ENCODE measurements at regions of chr15 and their contacts with region 1.

Region 1: DNA sequence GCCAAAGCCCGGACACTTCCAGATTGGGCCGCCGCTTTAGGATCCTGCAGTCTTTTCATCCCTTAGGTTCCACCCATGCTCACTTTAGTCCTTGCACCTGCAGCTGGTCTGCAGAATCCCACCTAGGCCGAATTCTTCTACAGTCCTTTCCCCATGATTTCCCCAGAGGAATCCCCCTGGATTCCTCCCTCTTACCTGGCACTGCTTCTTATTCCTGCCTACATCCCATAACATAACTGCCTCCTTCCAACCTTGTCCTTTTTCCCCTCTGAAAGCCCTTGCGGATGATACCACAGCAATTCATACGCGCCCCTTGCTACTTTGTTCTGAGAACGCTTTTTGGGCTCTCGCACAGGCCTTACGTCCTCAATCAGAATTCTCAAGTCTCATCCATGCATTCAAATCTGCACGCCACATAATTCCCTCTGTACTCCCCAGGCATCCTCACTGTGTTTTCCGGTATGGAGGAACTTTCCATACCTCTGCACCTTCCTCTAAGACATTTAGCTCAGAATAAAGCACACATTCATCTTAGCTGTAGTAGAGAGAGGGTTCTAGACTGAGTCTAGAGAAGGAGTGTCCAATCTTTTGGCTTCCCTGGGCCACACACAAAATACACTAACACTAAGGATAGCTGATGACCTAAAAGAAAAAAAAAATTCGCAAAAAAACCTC is 619 bp downstream of the EIF2AK4 start:
- DNase-seq: peak; percentile 28
- ATAC-seq: peak; percentile 2
- H3K4me3 ChIP-seq: peak overlapping the region; percentile 83
- H3K27ac ChIP-seq: peak overlapping the region; percentile 97
- H3K4me1 ChIP-seq: peaks cover 38% of the 10 kb centered on the region
- H3K27me3 ChIP-seq: no peaks in the 10 kb centered on the region
- CTCF ChIP-seq: no peak

Region 2: GRCh38 chr15:39336926-39337325 is 597.6 kb before region 1 on chr15:
- CTCF ChIA-PET with region 1: no interaction called
- POLR2A ChIA-PET with region 1: no interaction called
- intact Hi-C with region 1: no loop called
- DNase-seq: no peak
- ATAC-seq: no peak
- H3K4me3 ChIP-seq: no peak overlapping the region
- H3K27ac ChIP-seq: no peak overlapping the region
- H3K4me1 ChIP-seq: 0 out of 2 replicates have a peak, but pooled peaks cover 7% of the 10 kb centered on the region
- H3K27me3 ChIP-seq: no peaks in the 10 kb centered on the region
- CTCF ChIP-seq: no peak

Region 3: DNA sequence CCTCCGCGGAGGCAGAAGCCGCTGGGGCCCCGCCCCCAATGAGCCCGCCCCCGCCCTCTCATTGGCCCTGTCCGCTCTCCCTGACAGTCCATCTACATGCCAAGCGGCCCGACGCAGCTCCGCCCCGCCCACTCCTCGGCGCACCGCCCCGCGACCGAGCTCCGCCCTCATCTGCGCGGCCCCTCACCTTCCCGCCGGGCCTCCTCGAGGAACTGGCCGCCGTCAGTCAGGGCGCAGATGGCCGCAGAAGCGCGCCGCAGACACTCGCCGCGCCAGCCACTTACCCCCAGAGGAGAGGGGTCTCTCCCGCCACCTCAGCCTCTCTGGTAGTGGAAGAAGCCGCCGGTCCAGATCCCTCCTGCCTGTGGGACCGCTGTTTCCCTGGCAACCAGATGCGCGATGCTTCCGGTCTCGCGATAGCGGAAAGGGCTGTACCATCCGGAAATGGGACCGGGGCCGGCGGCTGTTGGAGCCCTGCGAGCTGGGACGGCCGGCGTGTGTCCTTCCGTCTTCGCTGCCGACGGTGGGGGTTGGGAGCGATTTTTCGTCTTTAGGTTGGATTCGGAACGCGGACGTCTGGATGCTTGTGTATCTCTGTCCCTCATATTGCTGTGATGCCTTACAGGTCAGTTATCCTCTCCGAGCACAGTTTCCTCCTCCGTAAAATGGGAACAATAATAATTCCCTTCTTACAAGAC is 151.9 kb before region 1 on chr15 and contains the start of gene FSIP1:
- CTCF ChIA-PET with region 1: interaction called, 3 read pairs
- POLR2A ChIA-PET with region 1: interaction called, 5 read pairs
- intact Hi-C with region 1: loop called (anchors 1 kb)
- DNase-seq: peak; percentile 97
- ATAC-seq: peak; percentile 88
- H3K4me3 ChIP-seq: peak within 1 kb of the TSS; percentile 97
- H3K27ac ChIP-seq: peak within 1 kb of the TSS; percentile 73
- H3K4me1 ChIP-seq: peaks cover 49% of the 10 kb centered on the region
- H3K27me3 ChIP-seq: no peaks in the 10 kb centered on the region
- CTCF ChIP-seq: no peak
- total RNA-seq, gene FSIP1: 0.07 and 0.81 TPM in 2 replicates

Region 4: GRCh38 chr15:39887832-39888231 is 46.7 kb before region 1 on chr15:
- CTCF ChIA-PET with region 1: interaction called, 16 read pairs
- POLR2A ChIA-PET with region 1: interaction called, 7 read pairs
- intact Hi-C with region 1: loop called (anchors 1 kb)
- DNase-seq: peak; percentile 76
- ATAC-seq: peak; percentile 91
- H3K4me3 ChIP-seq: no peak overlapping the region
- H3K27ac ChIP-seq: peak overlapping the region; percentile 45
- H3K4me1 ChIP-seq: peaks cover 22% of the 10 kb centered on the region
- H3K27me3 ChIP-seq: no peaks in the 10 kb centered on the region
- CTCF ChIP-seq: peak; percentile 78

Region 5: DNA sequence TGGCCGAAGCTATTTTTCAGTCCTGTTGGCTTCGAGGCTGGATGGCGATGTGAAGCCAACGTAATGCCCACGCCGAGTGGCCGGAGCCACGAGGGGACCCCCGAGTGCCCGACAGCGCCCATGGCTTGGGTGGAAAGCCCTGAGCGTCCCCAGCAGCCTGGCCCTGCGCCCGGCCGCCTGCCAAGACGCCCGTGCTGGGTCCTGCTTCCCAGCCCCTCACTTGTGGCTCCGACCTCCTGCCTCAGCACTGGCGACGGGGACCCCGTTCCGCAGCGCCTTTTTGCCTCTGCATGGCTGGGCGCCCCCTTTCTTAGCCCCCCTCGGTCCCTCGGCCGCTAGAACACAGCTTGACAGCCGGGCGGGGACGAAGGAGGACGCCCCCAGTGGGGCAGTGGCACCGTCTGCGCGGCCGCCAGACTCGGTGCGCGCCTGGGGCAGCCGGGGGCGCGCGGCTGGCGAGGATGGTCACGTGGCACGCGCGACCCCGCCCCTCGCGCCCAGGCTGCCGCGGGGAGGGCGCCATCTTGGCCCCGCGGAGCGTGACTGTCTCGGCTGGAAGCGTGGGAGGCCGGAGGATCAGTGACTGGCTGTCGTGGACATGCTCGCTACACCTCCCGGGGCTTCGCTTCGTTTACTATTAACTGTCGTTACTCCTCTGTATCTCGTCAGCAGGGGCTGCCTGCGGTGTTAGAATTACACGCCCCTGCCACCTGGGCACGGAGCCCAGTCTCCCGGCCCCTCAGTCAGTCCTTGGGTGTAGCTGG is 13.8 kb before region 1 on chr15:
- CTCF ChIA-PET with region 1: no interaction called
- POLR2A ChIA-PET with region 1: no interaction called
- intact Hi-C with region 1: loop called (anchors 1 kb)
- DNase-seq: peak; percentile 80
- ATAC-seq: peak; percentile 58
- H3K4me3 ChIP-seq: peak overlapping the region; percentile 89
- H3K27ac ChIP-seq: peak overlapping the region; percentile 64
- H3K4me1 ChIP-seq: peaks cover 25% of the 10 kb centered on the region
- H3K27me3 ChIP-seq: no peaks in the 10 kb centered on the region
- CTCF ChIP-seq: no peak

Region 6: GRCh38 chr15:39976291-39977274 is 42.0 kb after region 1 on chr15:
- CTCF ChIA-PET with region 1: no interaction called
- POLR2A ChIA-PET with region 1: no interaction called
- intact Hi-C with region 1: loop called (anchors 2 kb)
- DNase-seq: peak; percentile 75
- ATAC-seq: peak; percentile 97
- H3K4me3 ChIP-seq: peak overlapping the region; percentile 67
- H3K27ac ChIP-seq: peak overlapping the region; percentile 2; the same call in 1 of the 2 replicates
- H3K4me1 ChIP-seq: peaks cover 14% of the 10 kb centered on the region; the same call in 1 of the 2 replicates
- H3K27me3 ChIP-seq: no peaks in the 10 kb centered on the region
- CTCF ChIP-seq: peak; percentile 78

Measured in PC-3 (cell line).